Prostate gland (tissue), 2 donors: ENCODE measurements at regions of chr3 and their contacts with region 1.

Region 1: DNA sequence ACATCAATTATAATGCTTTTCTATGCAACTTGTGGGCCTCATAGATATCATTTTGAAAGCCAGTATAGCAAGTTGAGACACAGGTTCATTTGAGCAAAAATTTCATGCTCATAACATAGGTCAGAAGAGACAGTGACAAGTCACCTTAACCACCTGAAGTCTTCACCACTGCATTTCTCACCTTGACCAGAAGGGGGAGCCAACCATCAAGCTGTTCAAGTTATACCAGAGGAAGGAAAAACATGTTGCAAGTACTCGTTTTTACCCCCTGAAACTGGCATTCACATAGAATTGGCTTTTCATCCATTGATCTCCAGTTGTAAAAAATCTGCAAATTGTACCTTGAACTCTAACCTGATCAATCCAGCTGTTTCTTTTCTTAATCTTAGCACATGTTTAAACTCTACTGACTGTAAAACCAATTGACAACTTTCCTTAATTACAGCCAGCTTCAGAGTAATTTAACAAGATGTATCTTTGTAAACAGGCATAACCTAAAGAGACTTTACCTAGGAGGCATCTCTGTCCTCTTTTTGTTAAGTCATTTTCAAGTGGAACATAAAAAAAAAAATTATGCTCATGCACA is 1.4 kb downstream of the LMOD3 start:
- DNase-seq: peak; percentile 82
- H3K4me3 ChIP-seq: no peak overlapping the region
- H3K27ac ChIP-seq: no peak overlapping the region
- H3K4me1 ChIP-seq: no peaks in the 10 kb centered on the region
- H3K27me3 ChIP-seq: no peaks in the 10 kb centered on the region
- CTCF ChIP-seq: peak; percentile 62 to 84 (median 81)
- POLR2A ChIP-seq: no peak

Region 2: DNA sequence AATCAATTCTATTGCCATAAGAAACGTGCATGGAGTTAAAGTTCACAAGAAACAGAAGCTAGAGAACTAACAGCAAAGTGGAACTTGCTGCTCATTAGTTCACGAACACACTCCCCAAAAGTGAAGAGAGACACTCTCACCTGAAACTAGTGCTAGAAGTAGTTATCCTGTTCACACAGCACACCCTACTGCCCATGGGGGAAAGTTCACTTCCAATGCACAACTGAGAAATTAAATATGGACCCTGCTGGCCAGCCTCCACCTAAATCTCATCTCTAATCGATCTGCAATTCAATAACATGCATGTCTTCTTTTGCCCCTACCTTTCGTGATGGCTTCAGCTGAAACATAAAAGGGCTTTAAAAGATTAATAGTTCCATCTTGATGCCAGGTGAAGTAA is 304.3 kb after region 1 on chr3:
- intact Hi-C with region 1: loop called (anchors 5 kb)
- DNase-seq: no peak
- H3K4me3 ChIP-seq: no peak overlapping the region
- H3K27ac ChIP-seq: no peak overlapping the region
- H3K4me1 ChIP-seq: no peaks in the 10 kb centered on the region
- H3K27me3 ChIP-seq: no peaks in the 10 kb centered on the region
- CTCF ChIP-seq: peak in 3 of 4 experiments; percentile 23 to 51 (median 42)
- POLR2A ChIP-seq: no peak